PC-3 (cell line): ENCODE measurements at regions of chr6 and their contacts with region 1.

Region 1: DNA sequence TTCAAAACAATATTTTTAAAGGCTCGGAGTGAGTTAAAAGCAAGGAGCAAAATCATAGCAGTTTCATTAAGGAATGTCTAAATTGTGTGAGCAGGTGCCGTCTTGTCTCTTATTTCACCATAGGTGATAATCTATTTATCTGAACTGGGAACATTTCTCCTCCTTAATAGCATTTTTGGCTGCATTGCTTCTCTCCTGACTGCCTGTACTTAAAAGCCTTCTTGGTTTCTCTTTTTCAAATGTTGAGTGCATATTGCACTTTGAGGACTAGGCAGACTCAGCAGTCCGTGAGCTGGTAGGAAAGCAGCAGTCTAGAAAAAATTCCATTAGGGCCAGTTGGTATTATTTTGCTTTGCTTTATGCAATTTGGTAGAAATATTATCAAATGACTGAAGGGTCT is 645.9 kb downstream of the GRIK2 start:
- DNase-seq: no peak
- ATAC-seq: no peak
- H3K4me3 ChIP-seq: no peak overlapping the region
- H3K27ac ChIP-seq: no peak overlapping the region
- H3K4me1 ChIP-seq: no peaks in the 10 kb centered on the region
- H3K27me3 ChIP-seq: no peaks in the 10 kb centered on the region
- CTCF ChIP-seq: no peak

Region 2: DNA sequence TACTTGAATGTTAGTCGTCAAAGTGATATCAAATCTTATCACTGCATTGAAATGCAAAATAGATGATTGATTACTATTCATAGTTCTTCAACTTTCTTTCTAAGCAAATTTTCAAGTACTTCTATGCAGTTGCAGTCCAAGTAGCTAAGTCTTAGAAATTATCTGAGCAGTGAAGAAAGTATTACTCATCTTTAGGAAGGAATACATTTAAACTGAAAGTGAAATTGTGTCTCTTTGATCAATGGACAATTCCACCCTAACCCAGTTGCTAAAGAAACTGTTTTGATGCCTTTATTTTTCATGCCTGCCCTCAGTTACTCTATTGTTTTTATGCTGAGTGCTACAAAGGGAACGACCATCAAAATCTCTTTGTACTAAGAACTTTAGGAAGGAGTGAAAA is 308.5 kb before region 1 on chr6:
- CTCF ChIA-PET with region 1: no interaction called
- POLR2A ChIA-PET with region 1: no interaction called
- intact Hi-C with region 1: no loop called
- DNase-seq: no peak
- ATAC-seq: no peak
- H3K4me3 ChIP-seq: no peak overlapping the region
- H3K27ac ChIP-seq: no peak overlapping the region
- H3K4me1 ChIP-seq: no peaks in the 10 kb centered on the region
- H3K27me3 ChIP-seq: no peaks in the 10 kb centered on the region
- CTCF ChIP-seq: no peak

Region 3: GRCh38 chr6:101986476-101986875 is 53.0 kb before region 1 on chr6:
- CTCF ChIA-PET with region 1: no interaction called
- POLR2A ChIA-PET with region 1: no interaction called
- intact Hi-C with region 1: no loop called
- DNase-seq: no peak
- ATAC-seq: no peak
- H3K4me3 ChIP-seq: no peak overlapping the region
- H3K27ac ChIP-seq: no peak overlapping the region
- H3K4me1 ChIP-seq: no peaks in the 10 kb centered on the region
- H3K27me3 ChIP-seq: no peaks in the 10 kb centered on the region
- CTCF ChIP-seq: no peak

Region 4: GRCh38 chr6:102137859-102138258 is 98.4 kb after region 1 on chr6:
- CTCF ChIA-PET with region 1: no interaction called
- POLR2A ChIA-PET with region 1: interaction called, 11 read pairs
- intact Hi-C with region 1: no loop called
- DNase-seq: no peak
- ATAC-seq: no peak
- H3K4me3 ChIP-seq: no peak overlapping the region
- H3K27ac ChIP-seq: no peak overlapping the region
- H3K4me1 ChIP-seq: no peaks in the 10 kb centered on the region
- H3K27me3 ChIP-seq: no peaks in the 10 kb centered on the region
- CTCF ChIP-seq: no peak